PC-9 (cell line): ENCODE measurements at regions of chr1 and their contacts with region 1.

Region 1: GRCh38 chr1:92291372-92291999 is 7.3 kb downstream of the GLMN start:
- DNase-seq: peak; percentile 9 to 59
- H3K4me3 ChIP-seq: no peak overlapping the region
- H3K27ac ChIP-seq: no peak overlapping the region
- H3K4me1 ChIP-seq: no peaks in the 10 kb centered on the region
- H3K27me3 ChIP-seq: no peaks in the 10 kb centered on the region
- CTCF ChIP-seq: peak; percentile 89

Region 2: GRCh38 chr1:91500756-91501522 is 790.5 kb before region 1 on chr1 and contains the start of gene CDC7:
- CTCF ChIA-PET with region 1: no interaction called
- POLR2A ChIA-PET with region 1: no interaction called
- intact Hi-C with region 1: loop called (anchors 5 kb)
- DNase-seq: peak; percentile 78 to 87
- H3K4me3 ChIP-seq: peak within 1 kb of the TSS; percentile 70
- H3K27ac ChIP-seq: peak within 1 kb of the TSS; percentile 56
- H3K4me1 ChIP-seq: peaks cover 23% of the 10 kb centered on the region
- H3K27me3 ChIP-seq: no peaks in the 10 kb centered on the region
- CTCF ChIP-seq: peak; percentile 82
- total RNA-seq, gene CDC7: 11.5 and 13.1 TPM in 2 replicates

Region 3: GRCh38 chr1:91929250-91929649 is 362.2 kb before region 1 on chr1:
- CTCF ChIA-PET with region 1: interaction called, 3 read pairs
- POLR2A ChIA-PET with region 1: no interaction called
- intact Hi-C with region 1: loop called (anchors 1 kb)
- DNase-seq: peak in 1 of 2 experiments; percentile 20
- H3K4me3 ChIP-seq: no peak overlapping the region
- H3K27ac ChIP-seq: no peak overlapping the region
- H3K4me1 ChIP-seq: peaks cover 11% of the 10 kb centered on the region
- H3K27me3 ChIP-seq: no peaks in the 10 kb centered on the region
- CTCF ChIP-seq: no peak

Region 4: DNA sequence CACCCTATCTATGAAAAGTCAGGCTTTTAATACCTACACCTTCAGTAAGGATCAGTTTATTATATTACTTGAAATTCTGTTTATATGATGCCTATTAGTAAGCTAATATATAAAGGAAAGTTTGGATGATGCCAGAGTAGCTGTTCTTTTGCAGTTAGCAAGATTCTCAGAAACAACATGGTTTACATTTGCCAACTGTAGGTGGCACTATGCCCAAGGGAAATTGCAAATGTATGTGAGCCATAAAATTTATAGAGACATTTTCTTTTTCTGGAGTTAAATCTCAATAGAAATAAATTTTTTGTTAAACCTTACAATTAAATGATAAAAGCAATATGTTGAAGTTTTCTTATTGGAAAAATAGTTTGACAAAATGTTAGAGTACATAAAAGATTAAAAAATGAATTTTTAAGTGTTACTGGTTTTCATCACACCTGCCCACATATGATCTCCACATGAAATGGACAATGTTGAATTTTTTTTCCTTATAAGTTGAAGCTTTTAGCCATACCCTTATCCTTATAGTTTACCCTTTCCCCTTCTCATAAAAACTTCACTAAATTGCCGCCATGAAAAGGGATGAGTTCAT is 293.8 kb before region 1 on chr1:
- CTCF ChIA-PET with region 1: interaction called, 20 read pairs
- POLR2A ChIA-PET with region 1: no interaction called
- intact Hi-C with region 1: loop called (anchors 2 kb)
- DNase-seq: peak; percentile 20 to 64
- H3K4me3 ChIP-seq: no peak overlapping the region
- H3K27ac ChIP-seq: no peak overlapping the region
- H3K4me1 ChIP-seq: no peaks in the 10 kb centered on the region
- H3K27me3 ChIP-seq: no peaks in the 10 kb centered on the region
- CTCF ChIP-seq: peak; percentile 94